Natural killer cell (primary cell): ENCODE measurements at regions of chr19 and their contacts with region 1.

Region 1: GRCh38 chr19:17511724-17512573 is 500 bp downstream of the PGLS start:
- DNase-seq: peak; percentile 86 to 90
- ATAC-seq: peak; percentile 74 to 87 (median 76)
- H3K4me3 ChIP-seq: peak overlapping the region; percentile 72
- H3K4me3 Mint-ChIP-seq: peak overlapping the region; percentile 92
- H3K27ac ChIP-seq: peak overlapping the region; percentile 86
- H3K27ac Mint-ChIP-seq: peak overlapping the region; percentile 87 to 91
- H3K4me1 ChIP-seq: peaks cover 29% of the 10 kb centered on the region
- H3K4me1 Mint-ChIP-seq: peaks cover 21 to 25% of the 10 kb centered on the region in 2 donors
- H3K27me3 ChIP-seq: no peaks in the 10 kb centered on the region
- H3K27me3 Mint-ChIP-seq: no peaks in the 10 kb centered on the region
- CTCF ChIP-seq: no peak

Region 2: GRCh38 chr19:17470068-17470841 is 41.7 kb before region 1 on chr19 and contains the start of gene SLC27A1:
- intact Hi-C with region 1: no loop called
- DNase-seq: peak; percentile 87 to 93
- ATAC-seq: peak; percentile 72 to 84 (median 77)
- H3K4me3 ChIP-seq: peak within 1 kb of the TSS; percentile 94
- H3K4me3 Mint-ChIP-seq: peak within 1 kb of the TSS; percentile 98
- H3K27ac ChIP-seq: peak within 1 kb of the TSS; percentile 84
- H3K27ac Mint-ChIP-seq: peak within 1 kb of the TSS; percentile 90 to 96
- H3K4me1 ChIP-seq: peaks cover 44% of the 10 kb centered on the region
- H3K4me1 Mint-ChIP-seq: peaks cover 32 to 54% of the 10 kb centered on the region in 2 donors
- H3K27me3 ChIP-seq: no peaks in the 10 kb centered on the region
- H3K27me3 Mint-ChIP-seq: no peaks in the 10 kb centered on the region
- CTCF ChIP-seq: no peak
- total RNA-seq, gene SLC27A1: 12.9 to 26.2 (median 16.3) TPM

Region 3: GRCh38 chr19:17555480-17555928 is 43.6 kb after region 1 on chr19 and contains the start of gene COLGALT1:
- intact Hi-C with region 1: loop called (anchors 5 kb)
- DNase-seq: peak; percentile 97 to 99
- ATAC-seq: peak; percentile 99 to 100 (median 99)
- H3K4me3 ChIP-seq: peak within 1 kb of the TSS; percentile 57
- H3K4me3 Mint-ChIP-seq: peak within 1 kb of the TSS; percentile 86
- H3K27ac ChIP-seq: peak within 1 kb of the TSS; percentile 32
- H3K27ac Mint-ChIP-seq: peak within 1 kb of the TSS; percentile 61 to 79
- H3K4me1 ChIP-seq: peaks cover 18% of the 10 kb centered on the region
- H3K4me1 Mint-ChIP-seq: peaks cover 16 to 20% of the 10 kb centered on the region in 2 donors
- H3K27me3 ChIP-seq: no peaks in the 10 kb centered on the region
- H3K27me3 Mint-ChIP-seq: no peaks in the 10 kb centered on the region
- CTCF ChIP-seq: no peak
- total RNA-seq, gene COLGALT1: 39.0 to 55.4 (median 43.7) TPM